ENCODE measurements at regions of chr9 and their contacts with region 1.

Region 1: GRCh38 chr9:88476491-88477271 is 58.3 kb upstream of the NXNL2 start:
- DNase-seq: no peak
- H3K4me3 ChIP-seq: no peak overlapping the region
- H3K27ac ChIP-seq: no peak overlapping the region
- H3K4me1 ChIP-seq: no peaks in the 10 kb centered on the region
- H3K27me3 ChIP-seq: no peaks in the 10 kb centered on the region
- CTCF ChIP-seq: no peak
- EP300 ChIP-seq: no peak
- POLR2A ChIP-seq: no peak

Region 2: GRCh38 chr9:88378317-88378716 is 98.4 kb before region 1 on chr9:
- intact Hi-C with region 1: no loop called
- DNase-seq: no peak
- H3K4me3 ChIP-seq: no peak overlapping the region
- H3K27ac ChIP-seq: no peak overlapping the region
- H3K4me1 ChIP-seq: no peaks in the 10 kb centered on the region
- H3K27me3 ChIP-seq: no peaks in the 10 kb centered on the region
- CTCF ChIP-seq: peak in 1 of 3 experiments; percentile 8
- EP300 ChIP-seq: no peak
- POLR2A ChIP-seq: no peak

Region 3: GRCh38 chr9:88528080-88528790 is 51.6 kb after region 1 on chr9:
- intact Hi-C with region 1: loop called (anchors 5 kb)
- DNase-seq: no peak
- H3K4me3 ChIP-seq: no peak overlapping the region
- H3K27ac ChIP-seq: no peak overlapping the region
- H3K4me1 ChIP-seq: peaks cover 0 to 25% (median 3%) of the 10 kb centered on the region in 4 donors
- H3K27me3 ChIP-seq: no peaks in the 10 kb centered on the region
- CTCF ChIP-seq: no peak
- EP300 ChIP-seq: no peak
- POLR2A ChIP-seq: no peak